CD4-positive, alpha-beta memory T cell (primary cell): ENCODE measurements at regions of chr3 and their contacts with region 1.

Region 1: DNA sequence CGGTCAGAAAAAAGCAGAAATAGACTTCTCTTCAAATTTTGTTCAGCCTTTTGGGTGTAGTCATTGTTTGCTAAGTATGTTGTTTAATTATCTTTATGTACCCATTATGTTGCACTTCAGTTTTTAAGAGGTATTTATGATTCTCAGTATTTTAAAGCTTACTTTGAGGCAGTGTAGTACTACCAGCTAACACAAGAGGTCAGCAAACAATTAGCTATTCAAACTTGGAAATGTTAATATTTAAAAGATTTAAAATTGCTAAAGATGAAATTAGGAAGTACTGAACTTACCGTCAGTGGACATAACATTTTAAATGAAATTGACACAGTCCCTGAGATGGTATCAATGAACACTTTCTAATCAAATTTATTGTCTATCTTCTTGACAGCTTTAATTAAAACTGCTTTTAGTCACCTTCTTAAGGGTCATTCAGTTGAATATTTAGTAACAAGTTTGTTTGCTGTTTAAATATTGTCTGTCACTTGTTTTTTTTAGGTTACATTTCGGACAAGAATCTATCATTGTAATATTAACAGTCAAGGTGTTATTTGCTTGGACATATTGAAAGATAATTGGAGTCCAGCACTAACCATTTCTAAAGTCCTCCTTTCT is 28.1 kb downstream of the NKIRAS1 start:
- DNase-seq: peak in 4 of 5 donors; percentile 26 to 40 (median 28)
- H3K4me3 ChIP-seq: no peak overlapping the region
- H3K4me3 Mint-ChIP-seq: no peak overlapping the region
- H3K27ac ChIP-seq: no peak overlapping the region
- H3K27ac Mint-ChIP-seq: peak overlapping the region in 1 of 7 donors; percentile 62
- H3K4me1 ChIP-seq: no peaks in the 10 kb centered on the region
- H3K4me1 Mint-ChIP-seq: peaks cover 0 to 5% (median 0%) of the 10 kb centered on the region in 4 donors
- H3K27me3 ChIP-seq: no peaks in the 10 kb centered on the region
- H3K27me3 Mint-ChIP-seq: no peaks in the 10 kb centered on the region

Region 2: GRCh38 chr3:23877329-23877980 is 11.3 kb before region 1 on chr3:
- CTCF ChIA-PET with region 1: interaction called, 23 read pairs
- POLR2A ChIA-PET with region 1: interaction called, 3 read pairs
- intact Hi-C with region 1: no loop called
- DNase-seq: no peak
- H3K4me3 ChIP-seq: no peak overlapping the region
- H3K4me3 Mint-ChIP-seq: no peak overlapping the region
- H3K27ac ChIP-seq: no peak overlapping the region
- H3K27ac Mint-ChIP-seq: peak overlapping the region in 4 of 7 donors; percentile 12 to 58 (median 42)
- H3K4me1 ChIP-seq: no peaks in the 10 kb centered on the region
- H3K4me1 Mint-ChIP-seq: peaks cover 15 to 60% (median 30%) of the 10 kb centered on the region in 4 donors
- H3K27me3 ChIP-seq: no peaks in the 10 kb centered on the region
- H3K27me3 Mint-ChIP-seq: no peaks in the 10 kb centered on the region

Region 3: DNA sequence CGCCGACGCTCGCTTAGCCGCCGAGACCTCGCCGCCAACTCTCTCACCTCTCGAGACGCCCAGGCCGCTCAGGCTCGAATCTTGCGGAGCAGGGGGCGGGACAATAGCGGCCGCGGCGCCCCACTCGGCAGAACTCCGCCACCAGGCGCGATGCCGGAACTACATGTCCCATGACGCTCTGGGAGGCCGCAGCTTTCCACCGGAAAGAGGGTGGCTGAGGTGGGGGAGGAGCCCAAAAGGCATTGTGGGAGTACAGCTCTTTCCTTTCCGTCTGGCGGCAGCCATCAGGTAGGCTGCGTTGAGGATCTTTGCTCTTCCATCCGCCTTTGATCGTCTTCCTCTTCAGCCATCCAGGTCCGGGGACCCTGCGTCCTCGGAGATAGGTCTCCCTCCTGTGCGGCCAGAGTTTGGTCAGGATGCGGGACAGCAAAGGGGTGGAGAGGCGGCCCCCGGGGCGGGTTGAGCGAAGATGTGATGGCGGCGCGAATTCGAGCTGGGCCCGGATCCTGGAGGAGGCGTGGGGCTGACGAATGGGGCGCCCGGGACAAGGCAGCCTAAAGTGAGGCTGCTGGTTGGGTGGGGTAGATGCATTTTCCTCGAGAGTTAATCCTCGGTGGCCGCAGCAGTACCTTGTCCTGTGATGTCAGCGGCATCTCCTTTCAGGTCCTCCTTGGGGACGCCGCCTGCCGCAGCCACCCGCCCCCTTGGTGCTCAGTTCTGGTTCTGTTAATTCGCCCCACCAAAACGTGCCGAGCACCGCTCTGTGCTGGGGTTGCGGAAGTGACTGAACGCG is 28.4 kb after region 1 on chr3 and contains the starts of genes NKIRAS1 and RPL15:
- CTCF ChIA-PET with region 1: interaction called, 4 read pairs
- POLR2A ChIA-PET with region 1: interaction called, 10 read pairs
- intact Hi-C with region 1: no loop called
- DNase-seq: peak; percentile 97 to 98 (median 97)
- H3K4me3 ChIP-seq: peak within 1 kb of the TSS; percentile 89 to 90
- H3K4me3 Mint-ChIP-seq: peak within 1 kb of the TSS; percentile 98 to 99 (median 99)
- H3K27ac ChIP-seq: peak within 1 kb of the TSS; percentile 94
- H3K27ac Mint-ChIP-seq: peak within 1 kb of the TSS; percentile 92 to 100 (median 98)
- H3K4me1 ChIP-seq: peaks cover 37% of the 10 kb centered on the region
- H3K4me1 Mint-ChIP-seq: peaks cover 28 to 66% (median 40%) of the 10 kb centered on the region in 4 donors
- H3K27me3 ChIP-seq: no peaks in the 10 kb centered on the region
- H3K27me3 Mint-ChIP-seq: peaks cover 0 to 4% of the 10 kb centered on the region in 2 donors
- total RNA-seq, gene NKIRAS1: 5.2 to 5.3 TPM
- total RNA-seq, gene RPL15: 1,856 to 2,010 TPM

Region 4: GRCh38 chr3:23945903-23946751 is 57.4 kb after region 1 on chr3:
- CTCF ChIA-PET with region 1: interaction called, 4 read pairs
- POLR2A ChIA-PET with region 1: no interaction called
- intact Hi-C with region 1: loop called (anchors 2 kb)
- DNase-seq: peak; percentile 97 to 98 (median 98)
- H3K4me3 ChIP-seq: peak overlapping the region; percentile 83 to 86
- H3K4me3 Mint-ChIP-seq: peak overlapping the region; percentile 85 to 95 (median 88)
- H3K27ac ChIP-seq: peak overlapping the region; percentile 94
- H3K27ac Mint-ChIP-seq: peak overlapping the region; percentile 93 to 96 (median 95)
- H3K4me1 ChIP-seq: peaks cover 53% of the 10 kb centered on the region
- H3K4me1 Mint-ChIP-seq: peaks cover 38 to 61% (median 46%) of the 10 kb centered on the region in 4 donors
- H3K27me3 ChIP-seq: no peaks in the 10 kb centered on the region
- H3K27me3 Mint-ChIP-seq: no peaks in the 10 kb centered on the region

Region 5: GRCh38 chr3:23999012-23999641 is 110.4 kb after region 1 on chr3:
- CTCF ChIA-PET with region 1: interaction called, 15 read pairs
- POLR2A ChIA-PET with region 1: no interaction called
- intact Hi-C with region 1: loop called (anchors 2 kb)
- DNase-seq: peak; percentile 26 to 56 (median 36)
- H3K4me3 ChIP-seq: no peak overlapping the region
- H3K4me3 Mint-ChIP-seq: no peak overlapping the region
- H3K27ac ChIP-seq: no peak overlapping the region
- H3K27ac Mint-ChIP-seq: no peak overlapping the region
- H3K4me1 ChIP-seq: no peaks in the 10 kb centered on the region
- H3K4me1 Mint-ChIP-seq: peaks cover 0 to 4% (median 0%) of the 10 kb centered on the region in 4 donors
- H3K27me3 ChIP-seq: no peaks in the 10 kb centered on the region
- H3K27me3 Mint-ChIP-seq: peaks cover 3 to 4% of the 10 kb centered on the region in 2 donors